ENCODE measurements at regions of chr10 and their contacts with region 1.

Region 1: GRCh38 chr10:69506834-69507721 is 55.8 kb downstream of the TSPAN15 start:
- DNase-seq: peak; percentile 72
- H3K4me3 ChIP-seq: peak overlapping the region in 2 of 8 donors; percentile 29 to 63
- H3K27ac ChIP-seq: peak overlapping the region in 7 of 8 donors; percentile 7 to 61 (median 26)
- H3K4me1 ChIP-seq: peaks cover 0 to 17% (median 12%) of the 10 kb centered on the region in 6 donors
- H3K27me3 ChIP-seq: no peaks in the 10 kb centered on the region
- CTCF ChIP-seq: no peak
- POLR2A ChIP-seq: no peak

Region 2: GRCh38 chr10:69408318-69409175 is 98.5 kb before region 1 on chr10:
- intact Hi-C with region 1: loop called (anchors 5 kb)
- DNase-seq: peak; percentile 99
- H3K4me3 ChIP-seq: peak overlapping the region in 6 of 8 donors; percentile 4 to 62 (median 32)
- H3K27ac ChIP-seq: peak overlapping the region; percentile 86 to 94 (median 91)
- H3K4me1 ChIP-seq: peaks cover 6 to 62% (median 30%) of the 10 kb centered on the region in 6 donors
- H3K27me3 ChIP-seq: no peaks in the 10 kb centered on the region
- CTCF ChIP-seq: peak; percentile 45 to 99 (median 96)
- POLR2A ChIP-seq: no peak

Region 3: DNA sequence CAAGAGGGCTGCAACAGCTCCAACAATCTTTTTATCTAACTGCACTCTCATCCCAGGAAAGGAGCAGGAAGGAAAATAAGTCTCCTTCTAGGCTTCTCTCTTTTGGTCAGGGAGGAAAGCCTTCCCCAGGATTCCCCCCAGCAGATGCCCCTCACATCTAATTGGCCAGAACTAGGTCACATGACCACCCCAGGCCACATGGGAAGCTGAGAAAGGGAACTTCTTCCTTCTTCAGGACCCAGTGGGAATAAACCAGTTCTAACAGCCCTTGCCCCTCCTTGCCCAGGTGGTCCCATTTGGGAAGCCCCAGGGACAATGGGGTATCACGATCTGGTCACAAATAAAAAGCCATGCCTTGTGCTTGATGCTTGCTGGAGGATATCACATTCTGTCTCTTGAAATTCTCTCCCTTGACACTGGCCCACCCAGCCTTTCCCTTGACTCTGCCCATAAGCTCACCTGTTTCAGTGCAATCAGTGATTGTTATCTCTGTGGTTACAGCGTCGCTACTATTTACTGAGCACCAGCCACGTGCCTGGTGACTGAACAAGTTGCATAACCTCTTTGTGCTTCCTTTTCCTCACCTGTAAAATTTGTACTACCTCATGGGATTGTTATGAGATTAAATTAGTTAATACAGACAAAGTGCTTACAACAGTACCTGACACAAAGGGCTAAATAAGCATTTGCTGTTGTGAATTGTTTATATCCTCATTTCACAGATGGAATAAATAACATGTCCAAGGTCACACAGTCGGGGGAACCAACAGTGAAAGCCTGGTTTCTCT is 81.4 kb before region 1 on chr10:
- intact Hi-C with region 1: loop called (anchors 5 kb)
- DNase-seq: peak; percentile 35
- H3K4me3 ChIP-seq: no peak overlapping the region
- H3K27ac ChIP-seq: peak overlapping the region in 5 of 8 donors; percentile 5 to 68 (median 46)
- H3K4me1 ChIP-seq: peaks cover 0 to 27% (median 16%) of the 10 kb centered on the region in 6 donors
- H3K27me3 ChIP-seq: no peaks in the 10 kb centered on the region
- CTCF ChIP-seq: no peak
- POLR2A ChIP-seq: no peak

Region 4: DNA sequence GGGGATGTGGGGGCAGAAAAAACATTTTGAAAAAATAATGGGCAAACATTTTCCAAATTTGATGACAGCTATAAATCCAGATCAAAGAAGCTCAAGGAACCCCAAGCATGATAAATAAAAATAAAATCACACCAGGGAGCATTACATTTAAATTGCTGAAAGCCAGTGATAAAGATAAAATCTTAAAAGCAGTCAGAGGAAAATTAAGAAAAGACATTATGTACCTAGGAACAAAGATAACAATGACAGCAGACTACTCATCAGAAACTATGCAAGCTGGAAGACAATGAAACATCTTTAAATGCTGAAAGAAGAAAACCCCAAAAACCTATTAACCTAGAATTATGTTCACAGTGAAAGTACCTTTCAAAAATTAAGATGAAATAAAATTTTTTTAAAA is 42.9 kb after region 1 on chr10:
- intact Hi-C with region 1: no loop called
- DNase-seq: no peak
- H3K4me3 ChIP-seq: no peak overlapping the region
- H3K27ac ChIP-seq: no peak overlapping the region
- H3K4me1 ChIP-seq: no peaks in the 10 kb centered on the region
- H3K27me3 ChIP-seq: peaks cover 0 to 32% (median 0%) of the 10 kb centered on the region in 7 donors
- CTCF ChIP-seq: no peak
- POLR2A ChIP-seq: no peak